ENCODE measurements at regions of chr17 and their contacts with region 1.

Region 1: DNA sequence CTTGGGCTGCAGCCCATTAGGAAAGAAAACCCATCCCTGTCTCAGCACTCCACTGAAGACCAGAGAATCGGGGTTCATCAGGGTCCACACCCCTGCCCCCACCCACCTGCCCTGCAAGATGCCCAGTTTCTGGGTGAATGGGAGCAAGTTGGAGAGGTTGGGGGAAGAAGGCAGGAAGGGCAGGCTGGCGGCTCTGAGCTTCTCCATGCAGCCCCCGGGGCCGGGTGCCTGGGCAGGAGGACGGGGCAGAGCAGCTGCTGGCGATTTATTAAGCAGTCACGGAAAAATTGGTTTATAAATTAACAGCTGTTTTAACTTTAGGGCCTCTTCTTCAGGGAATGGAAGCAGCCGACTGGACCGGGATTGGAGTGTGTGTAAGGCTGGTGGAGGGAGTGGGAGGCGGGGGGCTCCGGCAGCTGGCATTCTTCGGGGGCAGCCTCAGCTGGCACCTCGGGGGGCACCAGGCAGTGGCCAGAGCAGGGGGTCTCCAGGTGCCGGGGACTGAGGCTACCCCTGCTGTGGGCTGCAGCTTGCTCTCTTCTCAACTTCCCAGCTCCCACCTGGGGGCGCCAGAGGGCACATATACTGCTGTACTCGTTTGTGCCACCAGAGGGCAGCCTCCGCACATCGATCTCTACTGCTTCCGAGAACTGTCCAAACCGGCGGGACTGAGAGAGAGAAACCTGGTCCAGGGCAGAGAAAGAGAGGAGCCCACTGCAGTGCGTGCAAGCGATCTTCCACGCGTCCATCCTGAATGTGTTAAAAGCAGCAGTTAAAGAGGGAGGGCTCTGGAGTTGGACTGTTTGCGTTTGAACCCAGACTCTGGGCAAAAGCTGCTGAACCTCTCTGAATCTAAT is 5.0 kb upstream of the PPP1R1B start:
- DNase-seq: peak; percentile 82 to 88 (median 84)
- ATAC-seq: peak; percentile 84
- H3K4me3 ChIP-seq: no peak overlapping the region
- H3K27ac ChIP-seq: no peak overlapping the region
- H3K4me1 ChIP-seq: peaks cover 3 to 38% of the 10 kb centered on the region in 2 experiments; a peak in 3 of 5 replicates
- H3K27me3 ChIP-seq: peaks cover 3 to 31% of the 10 kb centered on the region in 2 experiments; a peak in 2 of 5 replicates
- CTCF ChIP-seq: peak; percentile 100
- EP300 ChIP-seq: no peak
- POLR2A ChIP-seq: no peak
- RAD21 ChIP-seq: peak; percentile 96 to 98

Region 2: GRCh38 chr17:39484178-39484577 is 137.6 kb before region 1 on chr17:
- CTCF ChIA-PET with region 1: no interaction called
- POLR2A ChIA-PET with region 1: no interaction called
- in situ Hi-C with region 1: no loop called
- intact Hi-C with region 1: no loop called
- DNase-seq: no peak
- ATAC-seq: no peak
- H3K4me3 ChIP-seq: no peak overlapping the region
- H3K27ac ChIP-seq: no peak overlapping the region
- H3K4me1 ChIP-seq: peaks cover 0 to 3% of the 10 kb centered on the region in 2 experiments; a peak in 3 of 5 replicates
- H3K27me3 ChIP-seq: no peaks in the 10 kb centered on the region
- CTCF ChIP-seq: no peak
- EP300 ChIP-seq: no peak
- POLR2A ChIP-seq: no peak
- RAD21 ChIP-seq: no peak

Region 3: GRCh38 chr17:39547713-39548478 is 73.9 kb before region 1 on chr17:
- CTCF ChIA-PET with region 1: interaction called, 34 read pairs
- POLR2A ChIA-PET with region 1: interaction called, 4 read pairs
- in situ Hi-C with region 1: no loop called
- intact Hi-C with region 1: loop called (anchors 1 kb)
- DNase-seq: peak; percentile 75 to 79 (median 76)
- ATAC-seq: peak; percentile 95
- H3K4me3 ChIP-seq: no peak overlapping the region
- H3K27ac ChIP-seq: no peak overlapping the region
- H3K4me1 ChIP-seq: no peaks in the 10 kb centered on the region
- H3K27me3 ChIP-seq: no peaks in the 10 kb centered on the region
- CTCF ChIP-seq: peak; percentile 86 to 97 (median 88)
- EP300 ChIP-seq: no peak
- POLR2A ChIP-seq: no peak
- RAD21 ChIP-seq: peak; percentile 51 to 79; a peak in 3 of 4 replicates

Region 4: GRCh38 chr17:39653662-39654331 is 32.0 kb after region 1 on chr17:
- CTCF ChIA-PET with region 1: interaction called, 38 read pairs
- POLR2A ChIA-PET with region 1: interaction called, 6 read pairs
- in situ Hi-C with region 1: no loop called
- intact Hi-C with region 1: no loop called
- DNase-seq: peak; percentile 86 to 91 (median 89)
- ATAC-seq: peak; percentile 84
- H3K4me3 ChIP-seq: no peak overlapping the region
- H3K27ac ChIP-seq: no peak overlapping the region; the same call in 2 of the 3 replicates
- H3K4me1 ChIP-seq: peaks cover 48 to 55% of the 10 kb centered on the region in 2 experiments
- H3K27me3 ChIP-seq: no peaks in the 10 kb centered on the region
- CTCF ChIP-seq: peak; percentile 90 to 96 (median 91)
- EP300 ChIP-seq: no peak
- POLR2A ChIP-seq: no peak
- RAD21 ChIP-seq: peak; percentile 30 to 70

Region 5: DNA sequence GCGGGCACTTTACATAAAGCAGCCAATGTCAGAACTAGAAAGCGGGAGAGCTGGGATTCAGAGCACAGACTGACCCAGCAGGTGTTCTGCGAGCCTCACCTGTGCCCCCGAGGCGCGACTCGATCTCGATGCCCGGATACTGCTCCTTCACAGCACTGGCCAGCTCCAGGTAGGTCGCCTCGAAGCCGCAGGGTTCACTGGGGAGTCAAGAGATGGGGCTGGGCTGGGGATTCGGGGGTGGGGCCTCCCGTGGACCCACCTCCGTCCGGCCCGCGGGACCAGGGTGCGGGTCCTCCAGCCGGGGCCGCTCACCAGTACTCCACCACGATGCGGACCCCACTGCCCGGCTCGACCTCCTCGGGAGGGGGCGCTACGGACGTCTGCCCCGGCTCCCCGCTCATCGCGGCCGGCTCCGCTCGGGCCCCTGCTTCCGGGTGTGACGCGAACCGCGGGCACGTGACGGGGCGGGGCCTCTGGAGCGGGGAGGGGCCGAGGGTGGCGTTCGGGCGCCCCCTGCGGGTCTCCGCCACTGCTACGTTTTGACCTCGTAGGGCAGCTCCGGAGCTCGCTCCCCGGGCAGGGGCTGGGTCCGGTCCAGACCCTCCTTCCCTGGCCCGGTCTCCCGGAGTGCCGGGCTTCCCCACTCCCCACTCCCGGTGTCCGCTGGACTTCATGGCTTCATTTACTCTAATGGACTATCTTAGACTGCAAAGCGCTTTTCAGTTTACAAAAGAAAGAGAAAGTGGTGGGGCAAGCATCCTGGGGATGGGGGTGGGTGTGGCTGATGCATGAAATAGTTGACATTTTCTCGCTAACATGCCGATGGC is 108.6 kb after region 1 on chr17 and contains the start of gene MIEN1:
- CTCF ChIA-PET with region 1: interaction called, 13 read pairs
- POLR2A ChIA-PET with region 1: no interaction called
- in situ Hi-C with region 1: no loop called
- intact Hi-C with region 1: no loop called
- DNase-seq: peak; percentile 90 to 98 (median 98)
- ATAC-seq: peak; percentile 93
- H3K4me3 ChIP-seq: peak within 1 kb of the TSS; percentile 74
- H3K27ac ChIP-seq: peak within 1 kb of the TSS; percentile 87
- H3K4me1 ChIP-seq: peaks cover 6 to 31% of the 10 kb centered on the region in 2 experiments; a peak in 4 of 5 replicates
- H3K27me3 ChIP-seq: no peaks in the 10 kb centered on the region
- CTCF ChIP-seq: peak; percentile 80 to 92 (median 85)
- EP300 ChIP-seq: no peak
- POLR2A ChIP-seq: peak; percentile 85
- RAD21 ChIP-seq: peak; percentile 63 to 72
- polyA plus RNA-seq, gene MIEN1: 70.5 to 78.9 TPM

Region 6: GRCh38 chr17:39863918-39864746 is 242.4 kb after region 1 on chr17 and contains the start of gene IKZF3:
- CTCF ChIA-PET with region 1: no interaction called
- POLR2A ChIA-PET with region 1: no interaction called
- in situ Hi-C with region 1: no loop called
- intact Hi-C with region 1: loop called (anchors 2 kb)
- DNase-seq: peak; percentile 55 to 72 (median 66)
- ATAC-seq: peak; percentile 93
- H3K4me3 ChIP-seq: peak within 1 kb of the TSS; percentile 17; the same call in 1 of the 2 replicates
- H3K27ac ChIP-seq: no peak within 1 kb of the TSS
- H3K4me1 ChIP-seq: peaks cover 0 to 11% of the 10 kb centered on the region in 2 experiments; a peak in 3 of 5 replicates
- H3K27me3 ChIP-seq: peaks cover 15% of the 10 kb centered on the region in 2 experiments; a peak in 4 of 5 replicates
- CTCF ChIP-seq: peak; percentile 45 to 65 (median 47); a peak in 5 of 6 replicates
- EP300 ChIP-seq: no peak
- POLR2A ChIP-seq: no peak
- RAD21 ChIP-seq: peak; percentile 62 to 75
- polyA plus RNA-seq, gene IKZF3: 0.06 to 0.17 TPM